AG04449 (cell line): ENCODE measurements at regions of chr22 and their contacts with region 1.

Region 1: DNA sequence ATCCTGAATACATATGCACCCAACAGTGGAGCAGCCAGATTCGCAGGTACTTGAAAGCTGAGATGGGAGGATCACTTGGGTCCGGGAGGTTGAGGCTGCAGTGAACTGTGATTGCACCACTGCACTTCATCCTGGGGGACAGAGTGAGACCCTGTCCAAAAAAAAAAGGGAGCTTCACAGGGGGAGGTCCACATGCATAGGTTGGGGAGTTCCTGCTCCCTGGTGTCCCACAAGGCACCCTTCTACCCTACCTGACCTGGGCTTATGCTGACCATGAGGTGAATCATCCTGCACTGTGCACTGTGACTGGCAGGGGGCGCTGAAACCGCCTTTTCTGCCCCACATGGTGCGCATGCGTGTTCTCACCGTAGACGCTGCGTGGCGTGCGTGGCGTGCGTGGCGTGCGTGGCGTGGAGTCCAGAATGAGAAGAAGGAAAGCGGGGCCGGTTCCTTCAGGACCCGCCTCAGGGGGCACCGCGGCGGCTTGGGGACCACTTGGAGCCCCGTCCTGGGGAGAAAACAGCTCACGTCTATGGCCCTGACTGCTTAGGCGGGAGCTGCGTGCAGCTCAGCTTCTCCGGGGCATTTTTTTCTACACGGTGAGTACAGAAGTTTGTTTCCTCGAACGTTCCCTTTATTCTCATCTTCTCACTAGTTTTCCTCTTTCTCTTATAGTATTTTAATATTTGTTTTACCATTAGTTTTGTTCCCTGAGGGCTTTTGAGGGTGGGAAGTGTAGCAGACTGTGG is 116.6 kb upstream of the GRK3 start:
- DNase-seq: no peak
- H3K4me3 ChIP-seq: peak overlapping the region; percentile 77
- CTCF ChIP-seq: peak; percentile 99

Region 2: GRCh38 chr22:25403811-25404471 is 43.9 kb before region 1 on chr22:
- CTCF ChIA-PET with region 1: interaction called, 12 read pairs
- POLR2A ChIA-PET with region 1: no interaction called
- DNase-seq: no peak
- H3K4me3 ChIP-seq: peak overlapping the region; percentile 67
- CTCF ChIP-seq: no peak

Region 3: DNA sequence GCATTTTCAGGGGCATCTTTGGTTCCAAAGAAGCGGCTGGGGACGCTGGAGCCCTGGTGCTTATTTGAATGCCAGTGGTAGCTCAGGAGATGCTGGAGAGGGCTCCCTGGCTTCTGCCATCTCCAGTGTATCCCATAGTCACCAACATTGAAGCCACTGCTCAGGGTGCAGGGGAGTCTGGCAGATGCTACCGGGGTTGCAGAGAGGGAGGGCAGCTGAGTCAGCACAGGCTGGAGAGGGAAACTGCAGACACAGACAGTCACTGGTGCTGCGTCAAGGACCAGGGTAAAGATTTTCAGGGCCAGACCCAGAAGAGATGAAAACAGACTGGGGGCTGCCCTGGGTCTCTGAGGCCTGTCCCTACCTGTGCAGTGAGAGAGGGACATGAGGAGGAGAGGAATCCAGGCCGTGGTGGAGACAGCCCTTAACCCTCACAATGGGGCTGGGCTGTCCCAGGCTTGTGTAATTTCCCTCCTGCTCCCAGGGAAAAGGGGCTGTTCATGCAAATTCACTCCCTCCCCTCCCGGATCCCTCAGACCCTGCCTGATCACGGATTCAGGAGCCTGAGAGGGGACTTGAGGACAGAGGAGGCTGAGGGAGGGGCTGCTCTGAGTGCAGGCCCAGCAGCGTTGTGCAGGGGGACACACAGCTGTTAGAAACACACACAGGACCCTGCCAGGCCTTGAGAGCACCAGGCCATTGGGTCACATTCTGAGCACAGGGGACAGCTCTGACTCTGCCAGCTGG is 10.3 kb before region 1 on chr22:
- CTCF ChIA-PET with region 1: interaction called, 22 read pairs
- POLR2A ChIA-PET with region 1: no interaction called
- DNase-seq: no peak
- H3K4me3 ChIP-seq: no peak overlapping the region
- CTCF ChIP-seq: no peak

Region 4: GRCh38 chr22:25472382-25472781 is 24.5 kb after region 1 on chr22:
- CTCF ChIA-PET with region 1: no interaction called
- POLR2A ChIA-PET with region 1: no interaction called
- DNase-seq: no peak
- H3K4me3 ChIP-seq: no peak overlapping the region
- CTCF ChIP-seq: no peak

Region 5: GRCh38 chr22:25656724-25657123 is 208.9 kb after region 1 on chr22:
- CTCF ChIA-PET with region 1: no interaction called
- POLR2A ChIA-PET with region 1: no interaction called
- DNase-seq: no peak
- H3K4me3 ChIP-seq: no peak overlapping the region
- CTCF ChIP-seq: no peak

Region 6: GRCh38 chr22:25702040-25702439 is 254.2 kb after region 1 on chr22:
- CTCF ChIA-PET with region 1: interaction called, 18 read pairs
- POLR2A ChIA-PET with region 1: no interaction called
- DNase-seq: no peak
- H3K4me3 ChIP-seq: no peak overlapping the region
- CTCF ChIP-seq: peak; percentile 10

Region 7: DNA sequence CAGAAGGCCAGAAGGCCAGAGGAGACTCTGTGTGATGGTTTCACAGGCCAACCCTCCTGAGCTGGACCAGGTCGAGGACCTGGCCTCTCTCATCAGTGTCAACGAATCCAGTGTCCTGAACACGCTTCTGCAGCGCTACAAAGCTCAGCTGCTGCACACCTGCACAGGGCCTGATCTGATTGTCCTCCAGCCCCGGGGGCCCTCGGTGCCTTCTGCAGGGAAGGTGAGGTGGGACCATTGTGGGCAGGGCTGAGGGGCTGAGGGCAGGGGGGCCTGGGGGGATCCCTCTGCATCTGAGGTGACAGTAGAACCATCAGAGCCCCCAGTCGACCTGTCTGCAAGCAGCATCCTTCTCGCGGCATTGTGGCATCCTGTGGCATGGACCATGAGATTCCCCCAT is 324.4 kb after region 1 on chr22:
- CTCF ChIA-PET with region 1: interaction called, 10 read pairs
- POLR2A ChIA-PET with region 1: no interaction called
- DNase-seq: no peak
- H3K4me3 ChIP-seq: no peak overlapping the region
- CTCF ChIP-seq: no peak